ENCODE measurements at regions of chr11 and their contacts with region 1.

Region 1: DNA sequence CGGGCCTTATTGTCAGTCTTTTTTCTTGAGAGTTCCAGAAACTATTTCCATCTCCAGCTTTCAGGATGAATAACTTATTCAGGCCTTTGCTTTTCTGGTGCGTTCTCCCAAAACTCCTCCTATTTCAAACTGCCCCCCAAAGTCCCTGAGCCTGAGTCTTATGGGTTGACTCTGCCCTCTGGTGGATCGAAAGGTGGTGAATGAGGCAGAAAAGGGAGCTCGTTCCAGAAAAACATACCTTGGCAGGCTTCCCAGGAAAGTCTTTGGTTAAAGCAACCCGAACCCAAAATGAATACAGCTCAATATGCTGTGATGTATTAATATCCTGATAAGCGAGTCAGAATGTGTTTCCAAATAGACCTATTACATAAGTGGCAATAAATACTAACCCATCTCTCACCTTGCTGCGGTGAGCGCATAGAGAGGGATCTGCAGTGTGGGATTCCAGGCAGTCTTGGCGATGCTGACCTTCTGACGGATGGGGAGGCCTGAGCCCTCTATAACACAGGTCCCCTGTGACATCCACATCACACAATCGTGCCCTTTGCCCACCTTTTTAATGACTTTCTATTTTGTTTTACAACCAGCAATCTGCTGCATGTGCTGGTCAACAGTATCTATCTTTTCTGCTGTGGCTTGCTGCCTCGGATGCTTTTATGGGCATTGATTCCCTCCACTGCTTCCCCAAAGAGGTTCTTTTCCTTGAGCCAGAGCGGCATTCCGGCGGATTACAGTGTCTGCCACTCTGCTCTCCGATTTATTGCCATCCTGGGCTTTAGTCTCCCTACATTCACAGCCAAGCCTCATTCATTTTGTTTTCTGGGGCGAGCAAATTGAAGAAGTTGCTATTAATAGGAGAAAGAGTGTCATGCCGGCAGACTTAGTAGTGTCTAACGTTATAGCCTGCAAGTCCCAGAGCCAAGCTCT is 756.8 kb downstream of the NTM start:
- DNase-seq: peak; percentile 71
- H3K4me3 ChIP-seq: peak overlapping the region in 2 of 3 experiments; percentile 26 to 31
- H3K27ac ChIP-seq: no peak overlapping the region
- H3K4me1 ChIP-seq: peaks cover 11% of the 10 kb centered on the region
- H3K27me3 ChIP-seq: no peaks in the 10 kb centered on the region
- CTCF ChIP-seq: peak; percentile 61 to 66
- POLR2A ChIP-seq: no peak

Region 2: GRCh38 chr11:131737357-131737756 is 389.9 kb before region 1 on chr11:
- CTCF ChIA-PET with region 1: interaction called, 40 read pairs
- POLR2A ChIA-PET with region 1: no interaction called
- dilution Hi-C with region 1: no loop called
- intact Hi-C with region 1: no loop called
- DNase-seq: no peak
- H3K4me3 ChIP-seq: no peak overlapping the region
- H3K27ac ChIP-seq: no peak overlapping the region
- H3K4me1 ChIP-seq: peaks cover 6% of the 10 kb centered on the region
- H3K27me3 ChIP-seq: no peaks in the 10 kb centered on the region
- CTCF ChIP-seq: no peak
- POLR2A ChIP-seq: no peak

Region 3: GRCh38 chr11:131849485-131849884 is 277.8 kb before region 1 on chr11:
- CTCF ChIA-PET with region 1: no interaction called
- POLR2A ChIA-PET with region 1: no interaction called
- dilution Hi-C with region 1: no loop called
- intact Hi-C with region 1: no loop called
- DNase-seq: no peak
- H3K4me3 ChIP-seq: no peak overlapping the region
- H3K27ac ChIP-seq: no peak overlapping the region
- H3K4me1 ChIP-seq: peaks cover 3% of the 10 kb centered on the region
- H3K27me3 ChIP-seq: no peaks in the 10 kb centered on the region
- CTCF ChIP-seq: no peak
- POLR2A ChIP-seq: no peak

Region 4: DNA sequence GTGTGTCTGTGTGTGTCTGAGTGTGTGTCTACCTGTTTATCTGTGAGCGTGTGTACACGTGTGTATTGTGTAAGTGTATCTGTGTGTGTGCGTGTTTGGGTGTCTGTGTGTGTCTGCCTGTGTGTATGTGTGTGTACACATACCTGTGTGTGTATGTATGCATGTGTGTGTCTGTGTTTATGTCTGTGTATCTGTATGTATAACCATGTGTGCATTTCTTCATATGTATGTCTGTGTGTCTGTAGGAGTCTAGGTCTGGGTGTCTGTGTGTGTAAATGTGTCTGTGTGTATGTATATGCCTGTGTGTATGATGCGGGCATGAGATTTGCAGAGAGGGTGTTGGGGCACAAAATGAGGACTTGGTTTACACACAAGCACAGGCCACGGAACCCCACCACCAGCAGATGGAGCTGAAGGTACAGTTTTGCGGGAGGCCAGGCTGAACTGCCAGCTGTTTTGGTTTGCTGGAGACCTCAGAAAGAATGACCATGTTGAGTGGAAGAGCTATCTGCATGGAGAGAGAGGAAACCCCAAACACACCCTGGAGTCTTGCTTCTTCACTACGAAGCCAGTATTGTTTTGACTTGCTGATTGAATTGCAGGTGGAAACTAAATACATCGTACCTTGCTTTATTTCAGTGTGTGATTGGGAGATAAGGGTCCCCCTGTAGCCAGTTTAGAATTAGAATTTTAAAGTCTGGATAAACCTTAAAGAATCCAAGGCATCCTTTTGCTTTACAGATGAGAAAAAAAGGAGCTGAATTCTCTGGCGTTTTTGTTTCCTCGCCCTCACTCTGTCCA is 259.6 kb before region 1 on chr11:
- CTCF ChIA-PET with region 1: interaction called, 323 read pairs
- POLR2A ChIA-PET with region 1: interaction called, 4 read pairs
- dilution Hi-C with region 1: no loop called
- intact Hi-C with region 1: loop called (anchors 1 kb)
- DNase-seq: peak; percentile 80
- H3K4me3 ChIP-seq: no peak overlapping the region
- H3K27ac ChIP-seq: no peak overlapping the region
- H3K4me1 ChIP-seq: peaks cover 36% of the 10 kb centered on the region
- H3K27me3 ChIP-seq: no peaks in the 10 kb centered on the region
- CTCF ChIP-seq: peak; percentile 85 to 88
- POLR2A ChIP-seq: no peak

Region 5: GRCh38 chr11:131910523-131911387 is 216.5 kb before region 1 on chr11:
- CTCF ChIA-PET with region 1: interaction called, 322 read pairs
- POLR2A ChIA-PET with region 1: no interaction called
- dilution Hi-C with region 1: no loop called
- intact Hi-C with region 1: loop called (anchors 1 kb)
- DNase-seq: peak; percentile 43
- H3K4me3 ChIP-seq: peak overlapping the region; percentile 49 to 76 (median 64)
- H3K27ac ChIP-seq: peak overlapping the region; percentile 19
- H3K4me1 ChIP-seq: peaks cover 5% of the 10 kb centered on the region
- H3K27me3 ChIP-seq: peaks cover 0 to 10% of the 10 kb centered on the region in 2 experiments
- CTCF ChIP-seq: no peak
- POLR2A ChIP-seq: no peak

Region 6: DNA sequence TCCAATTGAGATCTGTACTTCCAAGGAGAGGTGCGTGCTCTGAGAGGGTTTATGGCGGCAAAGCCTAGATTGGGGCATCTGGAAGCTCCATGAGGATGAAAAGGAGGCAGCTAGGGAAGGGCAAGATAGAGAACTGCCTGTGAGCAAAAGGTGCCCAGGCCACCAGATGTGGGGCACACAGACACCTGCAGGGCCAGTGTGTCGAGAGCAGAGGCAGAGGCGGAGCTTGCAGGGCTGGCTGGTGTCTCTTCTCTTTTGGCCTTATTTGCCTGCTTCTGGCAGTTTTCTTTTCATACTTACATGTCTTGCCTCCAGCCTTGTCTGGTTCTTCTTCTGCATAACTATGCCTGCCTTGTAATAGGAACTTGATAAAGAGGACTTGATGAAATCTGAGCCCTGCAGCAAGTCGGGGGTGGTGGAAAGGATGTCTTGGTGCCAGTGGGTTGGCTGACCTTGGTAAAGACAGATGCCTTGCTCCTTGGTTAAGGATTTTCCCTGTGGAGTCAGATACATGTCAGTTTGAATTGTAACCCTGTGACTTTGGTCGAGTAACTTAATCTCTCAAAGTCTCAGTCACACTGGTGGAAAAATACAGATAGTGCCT is 76.6 kb before region 1 on chr11:
- CTCF ChIA-PET with region 1: interaction called, 11 read pairs
- POLR2A ChIA-PET with region 1: no interaction called
- dilution Hi-C with region 1: no loop called
- intact Hi-C with region 1: no loop called
- DNase-seq: no peak
- H3K4me3 ChIP-seq: no peak overlapping the region
- H3K27ac ChIP-seq: no peak overlapping the region
- H3K4me1 ChIP-seq: peaks cover 5% of the 10 kb centered on the region
- H3K27me3 ChIP-seq: no peaks in the 10 kb centered on the region
- CTCF ChIP-seq: no peak
- POLR2A ChIP-seq: no peak

Region 7: GRCh38 chr11:132114185-132114584 is 13.1 kb before region 1 on chr11:
- CTCF ChIA-PET with region 1: interaction called, 35 read pairs
- POLR2A ChIA-PET with region 1: no interaction called
- dilution Hi-C with region 1: no loop called
- intact Hi-C with region 1: no loop called
- DNase-seq: peak; percentile 44
- H3K4me3 ChIP-seq: no peak overlapping the region
- H3K27ac ChIP-seq: no peak overlapping the region
- H3K4me1 ChIP-seq: peaks cover 9% of the 10 kb centered on the region
- H3K27me3 ChIP-seq: no peaks in the 10 kb centered on the region
- CTCF ChIP-seq: peak in 1 of 2 donors; percentile 53
- POLR2A ChIP-seq: no peak

Region 8: DNA sequence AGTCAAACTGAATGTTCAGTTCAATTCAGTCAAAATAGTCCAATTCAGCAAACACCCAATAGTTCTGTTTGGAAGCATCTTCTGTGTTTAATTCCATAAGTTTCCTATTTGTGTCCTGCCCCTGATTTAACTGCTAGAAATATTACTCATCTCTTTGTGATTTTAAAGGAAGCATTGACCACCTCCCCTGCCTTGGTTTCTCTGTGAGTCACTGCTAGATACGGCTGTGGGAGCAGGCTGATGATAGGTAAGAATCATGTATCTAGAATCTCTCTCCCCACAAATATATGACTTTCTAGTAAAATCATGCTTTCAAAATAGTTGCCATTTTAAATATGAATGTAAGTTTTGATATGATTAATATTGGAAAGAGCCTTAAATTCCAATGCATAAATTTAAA is 131.6 kb after region 1 on chr11:
- CTCF ChIA-PET with region 1: no interaction called
- POLR2A ChIA-PET with region 1: no interaction called
- dilution Hi-C with region 1: no loop called
- intact Hi-C with region 1: no loop called
- DNase-seq: no peak
- H3K4me3 ChIP-seq: no peak overlapping the region
- H3K27ac ChIP-seq: no peak overlapping the region
- H3K4me1 ChIP-seq: no peaks in the 10 kb centered on the region
- H3K27me3 ChIP-seq: no peaks in the 10 kb centered on the region
- CTCF ChIP-seq: no peak
- POLR2A ChIP-seq: no peak

Region 9: GRCh38 chr11:133064152-133064877 is 937.1 kb after region 1 on chr11:
- CTCF ChIA-PET with region 1: interaction called, 14 read pairs
- POLR2A ChIA-PET with region 1: no interaction called
- dilution Hi-C with region 1: no loop called
- intact Hi-C with region 1: no loop called
- DNase-seq: peak; percentile 48
- H3K4me3 ChIP-seq: peak overlapping the region; percentile 14 to 64 (median 42)
- H3K27ac ChIP-seq: peak overlapping the region; percentile 12
- H3K4me1 ChIP-seq: peaks cover 8% of the 10 kb centered on the region
- H3K27me3 ChIP-seq: no peaks in the 10 kb centered on the region
- CTCF ChIP-seq: peak; percentile 63 to 68
- POLR2A ChIP-seq: no peak

Measured in endothelial cell of umbilical vein (primary cell).